GM13976 (cell line): ENCODE measurements at regions of chr10 and their contacts with region 1.

Region 1: GRCh38 chr10:132458593-132459300 is 61.7 kb downstream of the PWWP2B start:
- DNase-seq: peak; percentile 89
- CTCF ChIP-seq: peak; percentile 98

Region 2: DNA sequence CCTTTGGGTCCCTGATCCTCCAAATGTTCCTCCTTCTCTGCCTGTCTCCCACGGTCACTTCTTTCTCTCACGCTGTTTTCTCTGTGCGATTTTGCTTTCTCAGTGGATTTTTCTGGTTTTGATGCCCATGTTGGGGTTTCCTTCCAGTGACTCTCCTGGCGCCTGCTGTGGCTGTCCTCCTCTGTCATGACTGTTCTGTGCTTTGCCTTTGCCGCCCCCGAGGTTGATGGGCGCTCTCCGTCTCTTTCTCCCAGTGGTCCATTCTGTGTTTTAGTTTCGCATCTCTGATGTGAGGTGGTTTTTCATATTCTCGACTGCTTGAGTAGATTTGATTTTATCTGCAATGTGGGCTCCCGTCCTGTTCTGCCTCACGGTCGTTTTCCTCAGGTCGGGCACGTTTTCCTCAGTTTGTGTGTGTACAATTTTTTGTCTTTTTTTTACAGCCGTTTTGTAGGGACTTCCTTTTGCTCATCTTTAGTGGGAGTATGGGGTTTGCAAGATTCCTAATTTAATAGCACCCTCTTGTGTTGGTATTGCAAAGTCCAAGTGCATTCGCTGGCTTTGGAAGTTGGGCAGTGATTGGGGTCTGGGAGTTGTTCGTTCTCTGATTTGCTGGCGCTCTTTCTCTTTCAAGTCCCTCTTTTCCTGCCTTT is 178.9 kb after region 1 on chr10:
- in situ Hi-C with region 1: loop called (anchors 5 kb)
- DNase-seq: peak; percentile 84
- CTCF ChIP-seq: peak; percentile 64